Psoas muscle (tissue), 8 donors: ENCODE measurements at regions of chr21 and their contacts with region 1.

Region 1: GRCh38 chr21:34888569-34889319 is 160.4 kb downstream of the RUNX1 start:
- DNase-seq: peak; percentile 94 to 95
- ATAC-seq: peak; percentile 74 to 84 (median 78)
- H3K4me3 ChIP-seq: peak overlapping the region; percentile 87
- H3K27ac ChIP-seq: peak overlapping the region; percentile 94
- H3K4me1 ChIP-seq: peaks cover 16% of the 10 kb centered on the region
- H3K27me3 ChIP-seq: peaks cover 0 to 26% (median 8%) of the 10 kb centered on the region in 3 donors
- CTCF ChIP-seq: no peak

Region 2: DNA sequence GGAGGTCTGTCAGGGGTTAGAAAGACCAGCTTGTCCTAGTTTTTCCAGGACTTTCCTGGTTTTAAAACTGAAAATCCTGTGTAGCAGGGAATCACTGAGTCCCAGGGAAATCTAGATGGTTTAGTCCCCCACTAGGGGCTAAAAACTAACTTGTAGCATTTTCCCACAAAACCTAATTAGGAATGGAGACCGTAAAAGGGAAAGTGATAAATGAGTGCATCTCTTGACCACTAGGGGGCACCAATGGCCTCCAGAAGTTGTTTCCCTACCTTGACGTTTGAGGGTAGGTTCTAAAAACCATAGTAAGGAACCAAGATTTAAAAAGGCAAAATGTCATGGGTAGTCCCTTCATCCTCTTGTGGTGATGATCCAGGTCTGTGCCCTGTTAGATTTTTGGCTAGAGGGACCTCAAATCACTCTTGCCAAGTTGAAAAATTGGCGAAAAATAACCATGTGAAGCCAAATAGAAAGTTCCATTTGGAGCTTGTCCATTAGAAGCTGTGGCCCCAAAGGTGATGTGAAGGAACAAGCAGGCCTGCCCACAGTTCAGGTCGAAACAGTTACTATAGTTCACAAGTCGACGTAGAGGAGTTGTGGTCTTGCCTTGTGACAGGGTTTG is 195.4 kb before region 1 on chr21:
- intact Hi-C with region 1: loop called in 1 of 2 experiments (anchors 5 kb)
- DNase-seq: no peak
- ATAC-seq: peak; percentile 44 to 57 (median 50)
- H3K4me3 ChIP-seq: no peak overlapping the region
- H3K27ac ChIP-seq: no peak overlapping the region
- H3K4me1 ChIP-seq: peaks cover 26% of the 10 kb centered on the region
- H3K27me3 ChIP-seq: no peaks in the 10 kb centered on the region
- CTCF ChIP-seq: peak; percentile 88

Region 3: GRCh38 chr21:34795175-34795547 is 93.6 kb before region 1 on chr21:
- intact Hi-C with region 1: loop called in 1 of 2 experiments (anchors 5 kb)
- DNase-seq: no peak
- ATAC-seq: peak; percentile 21 to 68 (median 39)
- H3K4me3 ChIP-seq: peak overlapping the region; percentile 17
- H3K27ac ChIP-seq: peak overlapping the region; percentile 75
- H3K4me1 ChIP-seq: peaks cover 54% of the 10 kb centered on the region
- H3K27me3 ChIP-seq: no peaks in the 10 kb centered on the region
- CTCF ChIP-seq: peak; percentile 10

Region 4: DNA sequence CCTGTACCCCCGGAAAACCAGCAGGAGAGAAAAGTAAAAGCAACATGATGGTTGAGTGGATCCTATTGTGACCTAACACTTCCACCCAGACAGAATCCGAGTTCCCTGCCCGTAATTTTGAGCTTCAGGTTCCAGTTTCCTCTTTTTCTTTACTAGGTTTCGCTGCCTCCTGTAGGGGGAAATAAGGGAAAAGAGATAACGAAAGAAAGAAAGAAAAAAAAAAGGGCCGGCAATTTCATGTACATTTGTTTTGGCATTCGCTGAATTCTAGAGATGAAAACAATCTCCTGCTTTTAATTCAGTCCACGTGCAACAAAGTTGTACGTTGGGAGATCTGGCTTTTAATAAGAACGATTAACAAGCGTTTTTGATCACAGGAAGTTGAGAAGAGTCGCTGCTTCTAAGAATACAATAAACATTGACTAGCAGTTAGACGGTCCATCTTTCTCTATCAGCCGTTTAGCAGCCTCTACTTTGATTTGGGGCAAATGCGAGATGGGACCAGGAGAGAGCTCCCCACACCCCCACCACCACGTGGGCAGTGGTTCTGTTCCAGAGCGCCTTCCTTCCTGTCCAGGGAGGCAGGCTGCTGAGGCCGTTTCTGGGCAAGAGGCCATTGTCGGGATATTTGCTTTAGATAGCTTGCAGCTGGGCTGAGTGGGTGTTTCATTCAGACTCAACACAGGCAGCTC is 316.3 kb after region 1 on chr21:
- intact Hi-C with region 1: loop called in 1 of 2 experiments (anchors 10 kb)
- DNase-seq: peak; percentile 70 to 72
- ATAC-seq: peak in 1 of 4 donors; percentile 7
- H3K4me3 ChIP-seq: peak overlapping the region; percentile 29
- H3K27ac ChIP-seq: peak overlapping the region; percentile 85
- H3K4me1 ChIP-seq: peaks cover 61% of the 10 kb centered on the region
- H3K27me3 ChIP-seq: no peaks in the 10 kb centered on the region
- CTCF ChIP-seq: no peak

Region 5: GRCh38 chr21:35390013-35390776 is 501.5 kb after region 1 on chr21:
- intact Hi-C with region 1: loop called in 1 of 2 experiments (anchors 2 kb)
- DNase-seq: no peak
- ATAC-seq: peak; percentile 72 to 83 (median 77)
- H3K4me3 ChIP-seq: no peak overlapping the region
- H3K27ac ChIP-seq: peak overlapping the region; percentile 59
- H3K4me1 ChIP-seq: no peaks in the 10 kb centered on the region
- H3K27me3 ChIP-seq: no peaks in the 10 kb centered on the region
- CTCF ChIP-seq: no peak

Region 6: GRCh38 chr21:35616090-35616489 is 727.3 kb after region 1 on chr21:
- intact Hi-C with region 1: loop called in 1 of 2 experiments (anchors 5 kb)
- DNase-seq: no peak
- ATAC-seq: peak in 1 of 4 donors; percentile 35
- H3K4me3 ChIP-seq: no peak overlapping the region
- H3K27ac ChIP-seq: no peak overlapping the region
- H3K4me1 ChIP-seq: no peaks in the 10 kb centered on the region
- H3K27me3 ChIP-seq: no peaks in the 10 kb centered on the region
- CTCF ChIP-seq: peak; percentile 46

Region 7: GRCh38 chr21:35932232-35932911 is 1043.6 kb after region 1 on chr21:
- intact Hi-C with region 1: loop called in 1 of 2 experiments (anchors 10 kb)
- DNase-seq: peak; percentile 58 to 61
- ATAC-seq: peak; percentile 83 to 92 (median 88)
- H3K4me3 ChIP-seq: no peak overlapping the region
- H3K27ac ChIP-seq: peak overlapping the region; percentile 65
- H3K4me1 ChIP-seq: peaks cover 9% of the 10 kb centered on the region
- H3K27me3 ChIP-seq: peaks cover 0 to 6% (median 2%) of the 10 kb centered on the region in 3 donors
- CTCF ChIP-seq: no peak